ENCODE measurements at regions of chr2 and their contacts with region 1.

Region 1: GRCh38 chr2:121147766-121148165 is 137.2 kb downstream of the TFCP2L1 start:
- DNase-seq: no peak
- ATAC-seq: no peak
- H3K4me3 ChIP-seq: no peak overlapping the region
- H3K27ac ChIP-seq: no peak overlapping the region
- H3K4me1 ChIP-seq: peaks cover 0 to 19% (median 0%) of the 10 kb centered on the region in 12 donors
- H3K27me3 ChIP-seq: no peaks in the 10 kb centered on the region
- CTCF ChIP-seq: no peak
- POLR2A ChIP-seq: no peak

Region 2: GRCh38 chr2:121128754-121129659 is 18.8 kb before region 1 on chr2:
- intact Hi-C with region 1: loop called in 1 of 10 experiments (anchors 1 kb)
- DNase-seq: peak in 1 of 5 donors; percentile 40
- ATAC-seq: peak in 3 of 4 donors; percentile 43 to 61 (median 52)
- H3K4me3 ChIP-seq: no peak overlapping the region
- H3K27ac ChIP-seq: no peak overlapping the region
- H3K4me1 ChIP-seq: no peaks in the 10 kb centered on the region
- H3K27me3 ChIP-seq: peaks cover 0 to 13% (median 0%) of the 10 kb centered on the region in 9 donors
- CTCF ChIP-seq: peak; percentile 29 to 60 (median 44)
- POLR2A ChIP-seq: no peak

Region 3: GRCh38 chr2:121309801-121310200 is 162.0 kb after region 1 on chr2:
- intact Hi-C with region 1: no loop called
- DNase-seq: no peak
- ATAC-seq: no peak
- H3K4me3 ChIP-seq: no peak overlapping the region
- H3K27ac ChIP-seq: no peak overlapping the region
- H3K4me1 ChIP-seq: no peaks in the 10 kb centered on the region
- H3K27me3 ChIP-seq: peaks cover 0 to 11% (median 0%) of the 10 kb centered on the region in 9 donors
- CTCF ChIP-seq: no peak
- POLR2A ChIP-seq: no peak

Measured in heart left ventricle (tissue), 16 donors.